ENCODE measurements at regions of chr14 and their contacts with region 1.

Region 1: DNA sequence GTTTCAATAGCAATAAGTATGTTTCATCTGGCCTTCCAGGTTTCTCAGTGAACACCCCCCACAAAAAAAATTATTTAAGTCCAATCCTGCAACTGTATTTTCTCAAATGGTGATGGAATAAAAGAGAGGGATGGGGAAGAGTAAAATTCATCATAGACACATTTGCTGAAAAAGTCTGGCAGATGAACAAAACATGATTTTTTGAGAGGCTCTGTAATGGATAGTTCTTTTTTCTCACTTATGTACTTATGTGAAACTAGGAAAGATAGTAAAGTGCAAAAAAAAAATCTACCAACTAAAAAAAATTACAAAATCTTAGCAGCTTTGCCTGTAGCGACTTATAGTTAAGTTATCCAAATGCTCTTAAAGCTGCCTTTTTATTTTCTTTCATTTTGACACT is 412.4 kb downstream of the FOXG1 start:
- DNase-seq: no peak
- H3K4me3 ChIP-seq: no peak overlapping the region
- H3K27ac ChIP-seq: no peak overlapping the region
- H3K4me1 ChIP-seq: no peaks in the 10 kb centered on the region
- H3K27me3 ChIP-seq: no peaks in the 10 kb centered on the region
- CTCF ChIP-seq: no peak

Region 2: DNA sequence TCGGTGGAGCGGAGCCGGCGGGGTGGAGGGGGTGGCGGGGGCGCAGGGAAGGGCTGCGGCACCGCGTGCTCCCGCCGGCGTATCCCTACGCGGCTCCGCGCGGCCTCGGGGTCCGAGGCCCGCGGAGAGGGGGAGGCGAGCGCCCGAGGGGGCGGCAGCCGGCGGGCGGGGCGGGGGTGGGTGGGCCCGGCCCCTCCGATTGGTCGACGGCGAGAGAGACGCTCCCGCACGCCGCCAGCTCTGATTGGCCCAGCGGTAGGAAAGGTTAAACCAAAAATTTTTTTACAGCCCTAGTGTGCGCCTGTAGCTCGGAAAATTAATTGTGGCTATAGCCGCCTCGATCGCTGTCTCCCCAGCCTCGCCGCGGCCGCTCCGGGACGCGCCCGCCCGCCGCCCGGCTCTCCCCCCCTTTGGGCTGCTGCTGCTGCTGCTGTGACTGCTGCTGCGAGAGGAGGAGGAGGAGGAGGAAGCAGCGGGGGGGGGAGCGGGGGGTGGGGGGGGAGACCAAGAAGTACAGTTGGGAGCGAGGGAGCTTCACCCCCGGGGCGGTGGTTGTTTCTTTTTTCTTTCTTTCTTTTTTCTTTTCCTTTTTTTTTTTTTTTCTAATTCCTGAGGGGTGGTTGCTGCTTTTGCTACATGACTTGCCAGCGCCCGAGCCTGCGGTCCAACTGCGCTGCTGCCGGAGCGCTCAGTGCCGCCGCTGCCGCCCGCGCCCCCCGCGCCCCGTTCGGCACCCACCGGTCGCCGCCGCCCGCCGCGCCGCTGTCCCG is 412.3 kb before region 1 on chr14 and contains the start of gene FOXG1:
- CTCF ChIA-PET with region 1: no interaction called
- POLR2A ChIA-PET with region 1: no interaction called
- intact Hi-C with region 1: no loop called
- DNase-seq: no peak
- H3K4me3 ChIP-seq: no peak within 1 kb of the TSS
- H3K27ac ChIP-seq: no peak within 1 kb of the TSS
- H3K4me1 ChIP-seq: no peaks in the 10 kb centered on the region
- H3K27me3 ChIP-seq: no peaks in the 10 kb centered on the region
- CTCF ChIP-seq: no peak
- total RNA-seq, gene FOXG1: not detected in 2 replicates

Region 3: GRCh38 chr14:28813810-28814209 is 365.2 kb before region 1 on chr14:
- CTCF ChIA-PET with region 1: no interaction called
- POLR2A ChIA-PET with region 1: no interaction called
- intact Hi-C with region 1: loop called (anchors 10 kb)
- DNase-seq: no peak
- H3K4me3 ChIP-seq: no peak overlapping the region
- H3K27ac ChIP-seq: no peak overlapping the region
- H3K4me1 ChIP-seq: no peaks in the 10 kb centered on the region
- H3K27me3 ChIP-seq: no peaks in the 10 kb centered on the region
- CTCF ChIP-seq: no peak

Region 4: GRCh38 chr14:29236848-29237247 is 57.9 kb after region 1 on chr14:
- CTCF ChIA-PET with region 1: no interaction called
- POLR2A ChIA-PET with region 1: no interaction called
- intact Hi-C with region 1: no loop called
- DNase-seq: no peak
- H3K4me3 ChIP-seq: no peak overlapping the region
- H3K27ac ChIP-seq: peak overlapping the region; percentile 44
- H3K4me1 ChIP-seq: no peaks in the 10 kb centered on the region
- H3K27me3 ChIP-seq: no peaks in the 10 kb centered on the region
- CTCF ChIP-seq: no peak

Measured in PC-9 (cell line).